ENCODE measurements at regions of chr9 and their contacts with region 1.

Region 1: DNA sequence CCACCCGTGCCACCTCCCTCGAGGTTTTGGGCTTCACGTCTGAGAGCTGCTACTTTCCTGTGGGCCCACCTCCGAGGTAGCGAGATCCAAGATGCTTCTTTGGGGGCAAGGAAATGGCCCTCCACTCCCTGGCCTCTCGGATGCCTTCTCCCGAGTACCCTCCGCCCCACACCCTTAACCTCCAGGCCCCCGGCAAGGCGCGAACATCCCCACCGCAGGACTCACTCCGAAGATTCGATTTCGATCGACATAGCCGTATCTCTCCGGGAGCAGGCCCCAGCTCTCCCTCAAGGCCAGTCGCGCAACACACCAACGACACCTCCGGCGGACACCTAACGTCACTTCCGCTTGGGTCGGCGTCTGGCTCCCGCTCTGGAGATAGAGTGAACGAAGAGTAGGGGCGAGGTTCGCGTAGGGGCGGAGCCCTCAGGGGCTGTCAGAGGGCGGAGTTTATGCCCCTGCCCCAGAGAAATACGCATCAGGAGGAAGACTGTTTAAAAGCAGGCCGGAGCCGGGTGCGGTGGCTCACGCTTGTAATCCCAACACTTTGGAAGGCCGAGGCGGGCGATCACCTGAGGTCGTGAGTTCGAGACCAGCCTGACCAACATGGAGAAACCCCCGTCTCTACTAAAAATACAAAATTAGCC is at the start of gene SMU1:
- DNase-seq: peak; percentile 86
- ATAC-seq: peak; percentile 98
- H3K4me3 ChIP-seq: peak within 1 kb of the TSS; percentile 88
- H3K27ac ChIP-seq: peak within 1 kb of the TSS; percentile 79
- H3K4me1 ChIP-seq: peaks cover 10% of the 10 kb centered on the region; the same call in 1 of the 2 replicates
- H3K27me3 ChIP-seq: no peaks in the 10 kb centered on the region
- CTCF ChIP-seq: no peak
- EP300 ChIP-seq: no peak
- POLR2A ChIP-seq: peak; percentile 94
- RAD21 ChIP-seq: no peak
- polyA plus RNA-seq, gene SMU1: 18.5 to 20.7 TPM

Region 2: GRCh38 chr9:33116860-33117259 is 40.4 kb after region 1 on chr9:
- CTCF ChIA-PET with region 1: no interaction called
- POLR2A ChIA-PET with region 1: no interaction called
- RAD21 ChIA-PET with region 1: no interaction called
- SMC1A ChIA-PET with region 1: no interaction called
- in situ Hi-C with region 1: no loop called
- intact Hi-C with region 1: loop called (anchors 5 kb)
- DNase-seq: no peak
- ATAC-seq: peak; percentile 62
- H3K4me3 ChIP-seq: 0 out of 2 replicates have a peak overlapping the region, but pooled peaks have one; percentile 29
- H3K27ac ChIP-seq: peak overlapping the region; percentile 45
- H3K4me1 ChIP-seq: peaks cover 13% of the 10 kb centered on the region
- H3K27me3 ChIP-seq: no peaks in the 10 kb centered on the region
- CTCF ChIP-seq: no peak
- EP300 ChIP-seq: no peak
- POLR2A ChIP-seq: no peak
- RAD21 ChIP-seq: no peak

Region 3: GRCh38 chr9:33264473-33265177 is 188.1 kb after region 1 on chr9 and contains the starts of genes BAG1 and CHMP5:
- CTCF ChIA-PET with region 1: interaction called, 3 read pairs
- POLR2A ChIA-PET with region 1: no interaction called
- RAD21 ChIA-PET with region 1: no interaction called
- SMC1A ChIA-PET with region 1: no interaction called
- in situ Hi-C with region 1: no loop called
- intact Hi-C with region 1: loop called (anchors 1 kb)
- DNase-seq: peak; percentile 96
- ATAC-seq: peak; percentile 92
- H3K4me3 ChIP-seq: peak within 1 kb of the TSS; percentile 97
- H3K27ac ChIP-seq: peak within 1 kb of the TSS; percentile 98
- H3K4me1 ChIP-seq: peaks cover 8% of the 10 kb centered on the region
- H3K27me3 ChIP-seq: no peaks in the 10 kb centered on the region
- CTCF ChIP-seq: peak; percentile 15 to 31 (median 30); a peak in 2 of 6 replicates
- EP300 ChIP-seq: no peak
- POLR2A ChIP-seq: peak; percentile 86
- RAD21 ChIP-seq: 0 out of 2 replicates have a peak, but pooled peaks have one; percentile 12
- polyA plus RNA-seq, gene BAG1: 11.6 to 43.8 TPM
- polyA plus RNA-seq, gene CHMP5: 121 to 152 TPM

Region 4: GRCh38 chr9:33638391-33638915 is 562.0 kb after region 1 on chr9:
- CTCF ChIA-PET with region 1: no interaction called
- POLR2A ChIA-PET with region 1: no interaction called
- RAD21 ChIA-PET with region 1: no interaction called
- SMC1A ChIA-PET with region 1: no interaction called
- in situ Hi-C with region 1: no loop called
- intact Hi-C with region 1: no loop called
- DNase-seq: no peak
- ATAC-seq: no peak
- H3K4me3 ChIP-seq: no peak overlapping the region
- H3K27ac ChIP-seq: no peak overlapping the region
- H3K4me1 ChIP-seq: no peaks in the 10 kb centered on the region
- H3K27me3 ChIP-seq: no peaks in the 10 kb centered on the region; a peak in 1 of 4 replicates
- CTCF ChIP-seq: no peak
- EP300 ChIP-seq: no peak
- POLR2A ChIP-seq: no peak
- RAD21 ChIP-seq: no peak